Dorsolateral prefrontal cortex (tissue), 120 donors: ENCODE measurements at regions of chr12 and their contacts with region 1.

Region 1: DNA sequence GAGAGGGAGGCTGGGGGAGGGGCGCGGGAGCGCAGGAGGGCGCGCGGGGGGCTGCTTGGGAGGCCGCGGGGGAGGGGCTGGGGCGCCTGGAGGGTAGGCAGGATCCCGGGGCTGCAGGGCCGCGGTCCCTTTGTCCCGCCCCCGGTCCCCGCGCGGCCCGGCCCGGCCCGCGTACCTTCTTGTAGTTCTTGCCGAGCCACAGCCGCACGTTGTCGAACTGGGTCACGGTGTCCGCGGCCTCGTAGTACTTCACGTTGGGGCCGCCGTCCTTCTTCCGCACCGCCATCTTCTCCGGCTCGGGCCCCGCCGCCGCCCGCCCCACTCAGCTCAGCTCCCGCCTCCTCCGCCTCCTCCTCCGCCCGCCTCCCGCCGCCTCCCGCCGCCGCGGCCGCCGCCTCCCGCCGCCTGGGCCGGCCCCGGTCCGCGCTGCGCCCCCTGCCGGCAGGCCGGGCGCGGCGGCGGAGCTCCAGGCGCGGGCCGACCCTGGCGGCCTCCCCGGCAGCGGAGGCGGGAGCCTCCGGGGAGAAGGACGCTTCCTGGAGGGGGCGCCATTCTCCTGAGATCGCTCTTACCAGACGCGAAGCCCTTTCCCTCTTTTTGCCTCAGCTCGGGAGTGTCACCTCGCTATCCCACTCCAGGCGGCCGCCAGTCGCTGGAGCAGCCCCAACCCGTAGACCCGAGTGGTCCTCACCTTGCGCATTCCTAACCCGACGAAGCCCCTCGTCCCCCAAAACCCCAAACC is at the start of gene SMARCC2:
- DNase-seq: peak; percentile 56 to 88 (median 75)
- H3K4me3 ChIP-seq: peak within 1 kb of the TSS; percentile 68 to 93 (median 82)
- H3K27ac ChIP-seq: peak within 1 kb of the TSS; percentile 49 to 95 (median 88)
- H3K27me3 ChIP-seq: no peaks in the 10 kb centered on the region
- CTCF ChIP-seq: peak; percentile 35 to 83 (median 66)
- total RNA-seq, gene SMARCC2: 144 to 252 (median 196) TPM

Region 2: DNA sequence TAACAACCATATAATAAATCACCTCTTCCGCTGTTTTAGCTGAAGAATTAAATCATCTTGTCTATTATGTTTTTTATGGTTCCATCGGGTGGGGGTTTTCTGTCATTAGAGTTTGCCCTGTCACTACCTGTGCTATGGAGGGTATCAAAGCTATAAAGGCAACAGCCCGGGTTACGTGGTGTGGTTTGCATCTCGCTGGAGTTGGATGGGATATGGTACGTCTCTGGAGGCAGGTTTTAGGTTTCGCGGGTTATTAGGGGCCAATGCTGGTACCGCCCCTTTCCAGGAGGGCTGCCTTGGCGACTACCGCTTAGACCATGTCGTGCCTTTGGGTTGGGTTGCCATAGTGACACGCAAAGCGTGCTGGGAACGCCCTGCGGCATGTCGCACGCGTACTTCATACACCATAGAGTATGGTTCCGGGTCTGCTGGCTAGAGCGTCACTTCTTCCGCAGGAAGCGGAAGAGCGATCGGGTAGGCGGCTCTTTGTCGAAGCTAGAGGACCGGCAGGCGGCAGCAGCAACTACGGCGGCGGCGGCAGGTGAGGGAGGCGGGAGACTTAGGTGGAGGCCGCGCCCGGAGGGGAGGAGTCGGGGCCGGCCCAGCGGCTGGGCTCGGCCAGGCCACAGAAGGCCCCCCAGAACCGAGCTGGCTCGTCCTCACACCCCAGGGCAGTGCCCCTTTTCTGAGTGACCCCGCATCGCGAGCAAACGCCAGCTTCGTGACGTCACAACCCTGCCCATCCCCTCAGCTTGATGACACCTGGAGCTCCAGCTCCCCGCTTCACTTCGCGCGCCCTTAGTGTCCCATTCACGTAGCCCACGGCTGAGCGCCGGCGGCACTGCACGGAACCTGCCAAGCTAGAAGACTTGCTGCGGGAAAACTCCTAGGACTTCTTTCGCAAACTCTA is 71.3 kb before region 1 on chr12 and contains the start of gene ZC3H10:
- intact Hi-C with region 1: loop called in 1 of 2 experiments (anchors 2 kb)
- DNase-seq: peak; percentile 94 to 99 (median 98)
- H3K4me3 ChIP-seq: peak within 1 kb of the TSS; percentile 59 to 98 (median 85)
- H3K27ac ChIP-seq: peak within 1 kb of the TSS; percentile 64 to 99 (median 96)
- H3K27me3 ChIP-seq: no peaks in the 10 kb centered on the region
- CTCF ChIP-seq: peak in 55 of 56 donors; percentile 34 to 85 (median 68)
- total RNA-seq, gene ZC3H10: 4.3 to 14.7 (median 8.4) TPM

Region 3: GRCh38 chr12:56141946-56142784 is 47.2 kb before region 1 on chr12:
- intact Hi-C with region 1: no loop called
- DNase-seq: no peak
- H3K4me3 ChIP-seq: no peak overlapping the region
- H3K27ac ChIP-seq: peak overlapping the region in 4 of 59 donors; percentile 2 to 48 (median 42)
- H3K27me3 ChIP-seq: no peaks in the 10 kb centered on the region
- CTCF ChIP-seq: no peak

Region 4: DNA sequence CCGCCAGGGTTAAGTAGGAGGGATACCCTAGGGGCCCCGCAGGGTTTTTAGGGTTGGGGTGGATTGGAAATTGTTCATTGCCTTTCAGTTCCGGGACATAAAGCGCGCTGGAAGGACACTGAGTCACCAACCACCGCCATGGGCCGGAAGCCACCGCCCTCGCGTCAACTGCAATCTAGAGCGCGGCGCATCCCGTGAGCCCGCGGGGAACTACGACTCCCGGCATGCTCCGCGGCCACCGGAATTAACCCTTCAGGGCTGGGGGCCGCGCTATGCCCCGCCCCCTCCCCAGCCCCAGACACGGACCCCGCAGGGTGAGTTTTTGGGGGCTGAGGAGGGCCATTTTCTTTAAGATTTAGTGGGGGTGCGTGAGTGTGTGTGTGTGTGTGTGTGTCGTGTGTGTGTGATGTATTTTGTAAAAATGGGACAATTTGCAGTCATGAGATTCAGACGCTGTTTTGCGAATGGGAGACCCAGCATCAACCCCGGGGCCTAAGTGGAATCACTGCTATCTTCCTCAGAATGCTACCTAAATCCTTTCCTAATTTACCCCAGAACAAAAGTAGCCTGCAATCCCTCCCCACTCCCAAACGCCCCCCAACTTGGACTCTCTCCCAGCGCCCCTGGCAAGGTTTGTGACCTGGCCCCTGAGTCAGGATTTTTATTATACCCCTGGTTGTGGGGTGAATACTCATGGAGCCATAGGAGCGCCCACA is 36.9 kb before region 1 on chr12 and contains the start of gene MYL6B:
- intact Hi-C with region 1: loop called in 1 of 2 experiments (anchors 5 kb)
- DNase-seq: peak; percentile 91 to 96 (median 94)
- H3K4me3 ChIP-seq: peak within 1 kb of the TSS; percentile 58 to 93 (median 81)
- H3K27ac ChIP-seq: peak within 1 kb of the TSS; percentile 73 to 98 (median 93)
- H3K27me3 ChIP-seq: no peaks in the 10 kb centered on the region
- CTCF ChIP-seq: peak in 27 of 56 donors; percentile 1 to 51 (median 30)
- total RNA-seq, gene MYL6B: 75.7 to 236 (median 160) TPM

Region 5: GRCh38 chr12:56224102-56224701 is 34.9 kb after region 1 on chr12 and contains the start of gene NABP2:
- intact Hi-C with region 1: loop called (anchors 2 kb)
- DNase-seq: peak; percentile 96 to 98 (median 98)
- H3K4me3 ChIP-seq: peak within 1 kb of the TSS; percentile 55 to 95 (median 78)
- H3K27ac ChIP-seq: peak within 1 kb of the TSS; percentile 52 to 99 (median 89)
- H3K27me3 ChIP-seq: no peaks in the 10 kb centered on the region
- CTCF ChIP-seq: peak in 55 of 56 donors; percentile 80 to 99 (median 93)
- total RNA-seq, gene NABP2: 32.1 to 66.4 (median 49.1) TPM

Region 6: DNA sequence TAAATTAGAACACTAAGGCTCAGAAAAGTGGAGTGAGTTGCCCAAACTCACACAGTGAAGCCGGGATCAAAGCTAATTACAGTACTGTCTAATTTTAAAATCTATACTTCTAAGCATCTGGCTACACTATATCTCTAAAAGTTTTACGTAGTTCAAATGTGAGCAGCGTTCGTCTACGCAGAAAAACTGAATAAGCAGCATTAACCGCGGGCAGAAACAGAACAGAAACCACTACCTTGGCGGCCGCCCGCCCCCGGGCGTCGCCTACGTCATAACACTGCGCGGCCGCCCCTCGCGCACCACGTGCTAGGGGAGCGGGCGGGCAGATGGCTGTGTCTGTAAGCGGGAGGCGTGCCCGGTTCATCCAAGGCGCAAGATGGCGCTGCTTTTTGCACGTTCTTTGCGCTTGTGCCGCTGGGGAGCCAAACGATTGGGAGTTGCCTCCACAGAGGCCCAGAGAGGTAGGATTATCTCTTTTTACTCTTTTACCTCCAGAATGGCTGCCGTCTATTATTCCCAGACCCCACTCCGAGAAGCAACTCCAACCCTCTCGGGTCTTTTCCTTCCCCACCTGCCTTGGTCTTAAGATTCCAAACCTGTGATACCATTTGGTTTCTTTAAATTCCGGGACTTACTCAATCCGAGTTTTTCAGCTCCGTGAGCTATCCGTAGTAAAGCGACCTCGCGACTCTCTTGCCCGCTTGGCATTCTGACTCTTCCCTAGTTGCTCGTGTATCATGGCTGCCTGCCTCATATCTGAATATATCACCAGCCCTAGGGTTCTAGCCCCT is 279.1 kb after region 1 on chr12 and contains the start of gene SPRYD4:
- intact Hi-C with region 1: loop called (anchors 5 kb)
- DNase-seq: peak; percentile 90 to 97 (median 95)
- H3K4me3 ChIP-seq: peak within 1 kb of the TSS; percentile 56 to 99 (median 85)
- H3K27ac ChIP-seq: peak within 1 kb of the TSS; percentile 32 to 96 (median 91)
- H3K27me3 ChIP-seq: no peaks in the 10 kb centered on the region
- CTCF ChIP-seq: peak; percentile 45 to 94 (median 76)
- total RNA-seq, gene SPRYD4: 1.7 to 4.8 (median 2.6) TPM